ENCODE measurements at regions of chr7 and their contacts with region 1.

Region 1: GRCh38 chr7:45543461-45543860 is 30.7 kb upstream of the ADCY1 start:
- DNase-seq: no peak
- H3K4me3 ChIP-seq: no peak overlapping the region
- H3K27ac ChIP-seq: no peak overlapping the region
- H3K4me1 ChIP-seq: no peaks in the 10 kb centered on the region
- H3K27me3 ChIP-seq: no peaks in the 10 kb centered on the region
- CTCF ChIP-seq: no peak
- POLR2A ChIP-seq: no peak

Region 2: GRCh38 chr7:45524445-45524844 is 19.0 kb before region 1 on chr7:
- intact Hi-C with region 1: loop called (anchors 1 kb)
- DNase-seq: no peak
- H3K4me3 ChIP-seq: no peak overlapping the region
- H3K27ac ChIP-seq: no peak overlapping the region
- H3K4me1 ChIP-seq: no peaks in the 10 kb centered on the region
- H3K27me3 ChIP-seq: no peaks in the 10 kb centered on the region
- CTCF ChIP-seq: no peak
- POLR2A ChIP-seq: no peak